ENCODE measurements at regions of chr7 and their contacts with region 1.

Region 1: GRCh38 chr7:121591926-121592325 is 195.8 kb upstream of the FAM3C start:
- DNase-seq: no peak

Region 2: GRCh38 chr7:119996634-119997033 is 1595.3 kb before region 1 on chr7:
- intact Hi-C with region 1: no loop called
- DNase-seq: no peak

Region 3: DNA sequence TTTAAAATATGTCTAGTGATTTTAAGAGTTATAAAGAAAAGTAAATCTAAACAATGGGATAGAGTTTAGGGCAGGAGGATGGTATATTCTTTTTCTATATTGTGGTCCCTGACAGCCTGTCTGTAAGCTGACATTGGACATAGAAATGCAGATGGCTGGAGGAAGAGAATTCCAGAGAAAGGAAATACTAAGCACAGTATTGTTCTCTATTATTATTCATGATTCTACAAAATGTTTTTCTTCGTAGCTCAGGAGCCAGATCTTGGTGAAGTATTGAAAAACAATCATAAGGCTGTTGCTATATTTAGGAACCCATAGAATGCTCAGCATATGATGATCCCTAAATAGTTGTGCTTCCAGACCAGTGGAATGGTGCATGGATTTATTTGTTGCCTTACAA is 78.8 kb before region 1 on chr7:
- intact Hi-C with region 1: loop called in 1 of 2 experiments (anchors 2 kb)
- DNase-seq: no peak

Measured in posterior vena cava (tissue), 2 donors.